A673 (cell line): ENCODE measurements at regions of chr11 and their contacts with region 1.

Region 1: GRCh38 chr11:64688534-64688982 is 34.4 kb downstream of the NRXN2 start:
- DNase-seq: peak; percentile 96
- H3K4me3 ChIP-seq: peak overlapping the region; percentile 50
- H3K27ac ChIP-seq: no peak overlapping the region
- H3K4me1 ChIP-seq: peaks cover 5% of the 10 kb centered on the region
- H3K27me3 ChIP-seq: peaks cover 17% of the 10 kb centered on the region
- CTCF ChIP-seq: peak; percentile 98

Region 2: DNA sequence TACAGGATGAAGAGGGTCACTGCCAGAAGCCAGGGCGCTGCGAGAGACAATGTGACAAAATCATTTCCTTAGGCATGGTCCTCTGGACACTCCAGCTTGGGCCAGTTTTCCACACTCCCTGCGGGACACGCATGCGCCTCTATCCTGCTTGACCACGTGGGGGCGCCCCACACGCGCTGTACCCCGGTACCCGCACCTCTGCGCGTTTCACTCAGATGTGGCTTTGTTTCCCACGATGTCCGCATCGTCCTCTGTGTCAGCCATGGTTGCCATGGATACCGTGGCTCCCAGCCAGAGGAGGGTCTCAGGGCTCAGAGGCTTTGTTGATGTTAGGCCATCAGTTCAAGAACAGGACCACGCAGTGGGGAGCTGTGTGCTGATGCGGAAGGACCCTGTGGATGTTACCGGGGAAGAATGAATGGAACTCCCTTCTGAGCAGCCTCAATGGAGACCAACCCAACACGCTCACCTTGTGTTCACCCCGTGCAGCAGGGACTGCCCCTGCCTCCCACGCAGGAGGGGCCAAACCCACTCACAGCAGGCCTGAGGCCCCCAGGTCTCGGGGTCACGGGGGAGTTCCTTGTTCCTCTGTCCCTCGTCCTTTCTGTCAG is 198.6 kb before region 1 on chr11:
- CTCF ChIA-PET with region 1: no interaction called
- POLR2A ChIA-PET with region 1: no interaction called
- intact Hi-C with region 1: loop called (anchors 1 kb)
- DNase-seq: peak; percentile 72
- H3K4me3 ChIP-seq: no peak overlapping the region
- H3K27ac ChIP-seq: no peak overlapping the region
- H3K4me1 ChIP-seq: no peaks in the 10 kb centered on the region
- H3K27me3 ChIP-seq: peaks cover 51% of the 10 kb centered on the region
- CTCF ChIP-seq: peak; percentile 98

Region 3: GRCh38 chr11:64703048-64703447 is 14.5 kb after region 1 on chr11:
- CTCF ChIA-PET with region 1: interaction called, 11 read pairs
- POLR2A ChIA-PET with region 1: no interaction called
- intact Hi-C with region 1: no loop called
- DNase-seq: no peak
- H3K4me3 ChIP-seq: no peak overlapping the region
- H3K27ac ChIP-seq: no peak overlapping the region
- H3K4me1 ChIP-seq: no peaks in the 10 kb centered on the region
- H3K27me3 ChIP-seq: peaks cover 15% of the 10 kb centered on the region
- CTCF ChIP-seq: no peak

Region 4: GRCh38 chr11:64742889-64743590 is 54.5 kb after region 1 on chr11:
- CTCF ChIA-PET with region 1: no interaction called
- POLR2A ChIA-PET with region 1: no interaction called
- intact Hi-C with region 1: loop called (anchors 2 kb)
- DNase-seq: no peak
- H3K4me3 ChIP-seq: peak overlapping the region; percentile 58
- H3K27ac ChIP-seq: no peak overlapping the region
- H3K4me1 ChIP-seq: peaks cover 27% of the 10 kb centered on the region
- H3K27me3 ChIP-seq: peaks cover 27% of the 10 kb centered on the region
- CTCF ChIP-seq: peak; percentile 83